ENCODE measurements at regions of chr12 and their contacts with region 1.

Region 1: GRCh38 chr12:69570545-69571399 is 14.5 kb upstream of the CCT2 start:
- DNase-seq: peak in 4 of 10 donors; percentile 11 to 63 (median 54)
- H3K4me3 ChIP-seq: no peak overlapping the region
- H3K27ac ChIP-seq: no peak overlapping the region
- H3K27me3 ChIP-seq: no peaks in the 10 kb centered on the region
- CTCF ChIP-seq: peak; percentile 52 to 94 (median 79)

Region 2: DNA sequence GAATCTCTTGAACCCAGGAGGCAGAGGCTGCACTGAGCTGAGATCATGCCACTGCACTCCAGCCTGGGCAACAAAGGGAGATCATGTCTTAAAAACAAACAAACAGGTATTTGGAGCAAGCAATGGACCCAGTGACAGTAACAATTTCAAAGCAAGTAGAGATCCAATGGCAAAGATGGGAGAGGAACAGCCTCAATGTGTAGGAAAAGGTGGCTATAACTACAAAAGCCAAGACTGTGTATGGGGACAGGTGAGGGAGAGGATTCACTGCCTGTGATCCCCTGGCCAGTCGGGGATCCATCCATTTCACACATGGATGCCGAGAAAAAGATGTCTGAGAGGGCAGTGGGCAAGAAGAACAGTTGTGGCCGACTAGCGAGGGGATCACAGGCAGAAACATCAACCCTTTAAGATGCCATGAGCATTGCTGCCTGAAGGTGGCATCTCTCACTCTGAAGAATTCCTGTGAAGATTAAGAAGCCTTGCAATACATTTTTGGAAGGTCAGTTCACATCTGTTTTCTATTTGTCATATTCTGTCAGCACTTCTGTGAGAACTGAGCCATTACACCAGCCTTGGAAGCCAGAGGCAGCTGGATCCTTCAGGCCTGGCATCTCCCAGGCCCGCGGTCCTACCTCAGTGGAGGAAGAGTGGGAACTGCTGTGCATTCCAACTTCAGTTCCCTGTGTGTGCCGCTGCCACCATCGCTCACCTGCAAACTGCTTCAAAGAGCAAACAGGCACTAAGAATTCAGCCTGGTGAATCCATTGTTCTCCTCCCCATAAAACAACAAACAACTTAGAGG is 155.1 kb before region 1 on chr12:
- intact Hi-C with region 1: loop called (anchors 5 to 10 kb)
- DNase-seq: peak in 7 of 10 donors; percentile 27 to 68 (median 45)
- H3K4me3 ChIP-seq: peak overlapping the region in 8 of 59 donors; percentile 5 to 48 (median 28)
- H3K27ac ChIP-seq: peak overlapping the region in 22 of 59 donors; percentile 4 to 63 (median 31)
- H3K27me3 ChIP-seq: no peaks in the 10 kb centered on the region
- CTCF ChIP-seq: peak; percentile 23 to 91 (median 77)

Region 3: GRCh38 chr12:69497308-69498026 is 73.3 kb before region 1 on chr12:
- intact Hi-C with region 1: no loop called
- DNase-seq: no peak
- H3K4me3 ChIP-seq: no peak overlapping the region
- H3K27ac ChIP-seq: peak overlapping the region in 5 of 59 donors; percentile 1 to 45 (median 21)
- H3K27me3 ChIP-seq: no peaks in the 10 kb centered on the region
- CTCF ChIP-seq: no peak

Region 4: GRCh38 chr12:69527506-69528272 is 43.1 kb before region 1 on chr12:
- intact Hi-C with region 1: no loop called
- DNase-seq: no peak
- H3K4me3 ChIP-seq: no peak overlapping the region
- H3K27ac ChIP-seq: peak overlapping the region in 5 of 59 donors; percentile 2 to 41 (median 20)
- H3K27me3 ChIP-seq: no peaks in the 10 kb centered on the region
- CTCF ChIP-seq: no peak